GM13977 (cell line): ENCODE measurements at regions of chr1 and their contacts with region 1.

Region 1: DNA sequence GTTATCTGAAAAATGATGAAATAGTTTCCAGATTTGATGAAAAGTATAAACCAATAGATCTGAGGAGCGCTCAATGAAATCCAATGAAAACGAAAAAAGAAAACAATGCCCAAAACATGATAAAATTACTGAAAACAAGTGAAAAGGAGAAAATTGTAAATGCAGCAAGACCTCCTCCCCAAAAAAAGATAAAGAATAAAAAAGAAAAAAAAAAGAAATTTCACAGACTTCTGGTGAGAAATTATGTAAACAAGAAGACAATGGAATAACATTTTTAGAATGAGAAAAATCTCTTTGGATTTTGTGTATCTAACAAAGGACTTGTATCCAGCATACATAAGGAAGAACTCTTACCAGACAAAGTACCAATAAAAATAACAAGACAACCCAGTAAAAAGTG is 134.2 kb downstream of the DNAH14 start:
- DNase-seq: no peak
- CTCF ChIP-seq: no peak

Region 2: DNA sequence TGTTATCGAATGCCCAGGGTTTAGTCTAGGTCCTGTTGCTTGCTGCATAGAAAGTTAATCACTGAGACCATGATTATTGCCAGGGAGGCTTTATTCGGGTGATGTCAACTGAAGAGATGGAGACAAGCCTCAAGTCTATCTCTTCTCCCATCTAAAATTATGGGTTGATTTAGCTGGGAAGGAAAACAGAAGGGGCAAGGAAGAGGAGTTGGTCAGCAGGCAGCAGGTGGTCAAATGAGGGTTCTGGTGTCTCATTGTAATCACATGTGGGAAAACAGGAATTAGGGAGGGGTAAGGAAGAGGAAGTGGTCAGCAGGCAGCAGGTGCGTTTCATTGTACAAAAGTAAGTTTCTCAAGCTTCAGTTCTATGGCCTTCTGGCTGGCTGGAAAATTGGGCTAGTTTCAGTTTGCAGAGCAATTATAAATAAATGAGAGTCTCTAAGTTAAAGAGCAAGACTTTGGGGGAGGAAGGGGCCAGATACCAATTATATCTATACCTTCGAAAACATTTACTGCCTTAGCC is 280.5 kb before region 1 on chr1:
- in situ Hi-C with region 1: no loop called
- DNase-seq: no peak
- CTCF ChIP-seq: no peak

Region 3: DNA sequence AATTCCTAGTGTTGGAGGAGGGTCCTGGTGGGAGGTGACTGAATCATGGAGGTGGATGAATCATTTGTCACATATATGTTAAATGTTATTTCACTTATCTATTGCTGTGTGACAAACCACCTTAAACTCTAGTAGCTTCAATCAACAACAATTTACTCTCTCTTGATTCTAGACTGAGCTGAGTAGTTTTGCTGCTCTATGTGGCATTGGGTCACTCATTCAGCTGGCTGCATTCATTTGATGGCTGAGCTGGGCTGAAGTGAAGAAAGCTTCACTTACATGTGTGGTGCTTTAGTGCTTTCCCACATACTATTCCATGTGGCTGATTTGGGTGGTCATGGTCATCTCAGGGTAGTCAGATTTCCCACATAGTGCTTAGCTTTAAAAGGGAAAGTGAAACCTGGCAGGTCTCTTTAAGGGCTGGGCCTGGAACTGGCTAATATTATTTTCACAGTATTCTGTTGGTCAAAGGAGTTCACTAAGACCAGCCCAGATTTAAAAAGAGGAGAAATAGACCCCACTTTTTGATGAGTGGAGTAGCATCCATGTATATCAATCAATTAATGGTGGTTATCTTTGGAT is 123.8 kb before region 1 on chr1:
- in situ Hi-C with region 1: loop called (anchors 5 kb)
- DNase-seq: no peak
- CTCF ChIP-seq: no peak